Colonic mucosa (tissue), 4 donors: ENCODE measurements at regions of chr19 and their contacts with region 1.

Region 1: DNA sequence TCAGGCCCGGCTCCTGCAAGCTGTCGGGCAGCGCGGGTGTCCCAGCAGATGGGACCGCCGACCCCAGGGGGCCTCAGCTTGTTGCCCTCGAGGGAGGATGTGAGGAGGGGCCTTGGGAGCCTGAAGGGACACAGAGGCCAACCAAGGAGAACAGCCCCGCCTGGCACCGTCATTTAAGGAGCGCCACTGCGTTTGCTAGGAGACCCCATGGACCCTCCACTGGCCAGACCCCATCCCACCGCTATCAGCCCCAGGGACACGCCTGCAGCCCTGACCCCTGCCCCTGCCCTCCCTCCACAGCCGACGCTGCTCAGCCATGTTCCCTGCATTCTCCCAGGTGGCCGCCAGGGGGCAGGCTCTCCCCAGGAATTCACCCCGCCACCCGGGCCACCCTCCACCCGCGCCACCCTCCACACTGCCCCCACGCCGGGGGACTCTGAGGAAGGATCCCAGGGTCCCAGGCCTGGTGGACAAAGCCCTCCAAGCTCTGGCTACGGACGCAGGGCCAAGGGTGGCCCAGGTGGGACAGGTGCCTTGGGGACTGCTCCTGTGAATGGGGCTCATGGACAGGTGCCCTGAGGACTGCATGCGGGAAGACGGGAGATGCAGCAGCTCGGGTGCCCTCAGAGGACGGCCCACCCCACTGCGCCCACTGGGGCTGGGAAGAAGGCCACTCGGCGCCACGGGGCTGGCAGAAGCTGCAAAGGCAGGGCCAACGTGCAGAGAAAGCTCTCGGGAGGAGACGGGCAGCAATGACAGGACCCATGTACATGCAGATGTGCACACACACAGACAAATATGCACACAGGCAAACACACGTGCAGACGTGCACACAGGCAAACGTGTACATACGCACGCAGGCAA is 34.4 kb downstream of the PIP5K1C start:
- DNase-seq: peak; percentile 73
- H3K4me3 ChIP-seq: no peak overlapping the region
- H3K27ac ChIP-seq: no peak overlapping the region
- H3K4me1 ChIP-seq: peaks cover 6% of the 10 kb centered on the region
- H3K27me3 ChIP-seq: no peaks in the 10 kb centered on the region
- CTCF ChIP-seq: peak; percentile 96

Region 2: GRCh38 chr19:3324321-3324856 is 341.5 kb before region 1 on chr19:
- intact Hi-C with region 1: no loop called
- DNase-seq: peak; percentile 78
- H3K4me3 ChIP-seq: no peak overlapping the region
- H3K27ac ChIP-seq: no peak overlapping the region
- H3K4me1 ChIP-seq: no peaks in the 10 kb centered on the region
- H3K27me3 ChIP-seq: no peaks in the 10 kb centered on the region
- CTCF ChIP-seq: peak; percentile 58

Region 3: DNA sequence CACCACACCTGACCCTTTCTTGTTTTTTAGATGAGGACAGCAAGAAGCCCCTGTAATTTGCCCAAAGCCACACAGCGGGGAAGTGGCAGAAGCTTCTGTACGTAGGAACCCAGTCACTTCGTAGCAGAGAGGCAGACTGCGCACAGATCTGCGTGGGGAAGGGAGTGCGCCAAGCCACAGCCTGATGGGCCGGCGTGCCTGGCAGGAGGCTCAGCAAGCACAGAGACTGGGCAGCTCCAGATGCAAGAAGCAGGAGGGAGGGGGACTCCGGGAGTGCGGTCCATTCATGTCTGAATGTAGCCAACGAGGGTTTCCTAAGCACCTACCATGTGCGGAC is 41.9 kb after region 1 on chr19:
- intact Hi-C with region 1: loop called (anchors 2 kb)
- DNase-seq: no peak
- H3K4me3 ChIP-seq: peak overlapping the region; percentile 44
- H3K27ac ChIP-seq: peak overlapping the region; percentile 91
- H3K4me1 ChIP-seq: peaks cover 4% of the 10 kb centered on the region
- H3K27me3 ChIP-seq: no peaks in the 10 kb centered on the region
- CTCF ChIP-seq: no peak

Region 4: DNA sequence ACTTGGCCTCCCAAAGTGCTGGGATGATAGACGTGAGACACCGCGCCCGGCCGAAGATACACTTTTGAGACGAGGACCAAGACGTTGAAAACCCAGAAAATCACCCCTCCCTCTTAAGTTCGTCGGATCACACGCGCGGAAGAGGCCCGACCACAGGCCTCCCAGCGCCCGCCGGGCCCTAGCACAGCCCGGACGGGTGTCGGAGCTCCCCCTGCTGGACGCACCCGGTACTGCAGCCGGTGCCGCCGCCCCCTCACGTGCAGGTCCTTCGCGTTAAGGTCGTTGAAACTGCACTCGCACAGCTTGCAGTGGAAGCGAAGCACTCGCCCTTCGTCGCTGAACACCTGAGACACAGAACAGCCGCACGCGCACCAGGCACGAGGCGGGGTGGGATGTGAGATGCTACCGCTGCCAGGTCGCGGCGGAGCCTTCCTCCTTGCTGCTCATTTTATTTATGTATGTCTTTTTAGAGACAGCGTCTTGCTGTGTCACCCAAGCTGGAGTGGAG is 156.0 kb after region 1 on chr19:
- intact Hi-C with region 1: loop called (anchors 1 kb)
- DNase-seq: peak; percentile 72
- H3K4me3 ChIP-seq: no peak overlapping the region
- H3K27ac ChIP-seq: no peak overlapping the region
- H3K4me1 ChIP-seq: no peaks in the 10 kb centered on the region
- H3K27me3 ChIP-seq: no peaks in the 10 kb centered on the region
- CTCF ChIP-seq: peak; percentile 99